Esophagus squamous epithelium (tissue), 5 donors: ENCODE measurements at regions of chr4 and their contacts with region 1.

Region 1: DNA sequence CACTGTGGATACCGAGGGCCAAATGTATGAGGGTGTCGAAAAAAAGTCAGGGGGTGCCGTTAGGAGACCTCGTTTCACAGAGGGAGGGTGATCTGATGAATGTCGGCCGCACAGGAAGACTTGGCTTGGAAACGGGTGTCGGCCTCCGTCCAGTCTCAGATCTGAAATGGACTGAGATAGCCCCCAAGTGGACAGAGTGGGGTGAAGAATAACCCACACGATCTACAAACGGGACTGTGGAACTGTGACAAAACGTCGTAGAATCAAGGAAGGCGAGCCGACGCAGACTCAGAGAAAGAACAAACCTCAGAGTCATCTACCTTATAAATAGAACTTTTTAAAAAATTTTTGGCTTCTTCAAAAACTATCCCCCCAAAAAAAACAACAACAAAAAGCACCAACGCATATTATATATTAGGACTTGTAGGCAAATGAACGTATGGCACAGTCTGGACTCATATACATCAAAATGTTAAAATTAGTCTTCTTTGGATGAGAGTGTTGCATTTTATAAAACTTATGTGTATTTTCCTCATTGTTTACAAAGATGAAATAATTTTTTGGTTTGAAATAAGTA is 63.8 kb upstream of the IRF2 start:
- DNase-seq: peak; percentile 68
- H3K4me3 ChIP-seq: peak overlapping the region; percentile 49 to 85 (median 66)
- H3K27ac ChIP-seq: peak overlapping the region; percentile 91 to 99 (median 96)
- H3K4me1 ChIP-seq: peaks cover 3 to 35% (median 25%) of the 10 kb centered on the region in 3 donors
- H3K27me3 ChIP-seq: no peaks in the 10 kb centered on the region
- CTCF ChIP-seq: peak; percentile 56 to 81 (median 74)
- POLR2A ChIP-seq: no peak

Region 2: DNA sequence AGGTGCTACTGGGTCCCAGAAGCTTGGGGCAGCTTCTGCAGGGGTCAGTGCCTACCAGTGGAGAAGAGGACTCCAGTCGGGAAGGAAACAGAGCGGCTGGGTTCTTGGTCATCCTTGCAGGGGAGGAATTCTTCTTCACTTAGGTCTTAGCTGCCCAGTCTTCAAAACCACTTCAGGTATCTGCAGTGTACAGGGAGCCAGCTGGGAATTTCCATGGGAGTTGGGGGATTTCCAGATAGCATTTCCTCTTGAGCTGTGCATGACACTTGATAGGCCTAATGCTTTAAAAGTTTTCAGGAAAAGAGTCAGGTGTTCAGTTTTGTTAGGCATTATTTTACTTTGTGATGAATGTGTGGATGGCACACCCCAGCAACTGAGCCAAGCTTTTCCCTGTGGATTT is 262.3 kb before region 1 on chr4:
- intact Hi-C with region 1: loop called (anchors 5 kb)
- DNase-seq: no peak
- H3K4me3 ChIP-seq: no peak overlapping the region
- H3K27ac ChIP-seq: no peak overlapping the region
- H3K4me1 ChIP-seq: peaks cover 0 to 1% (median 0%) of the 10 kb centered on the region in 3 donors
- H3K27me3 ChIP-seq: no peaks in the 10 kb centered on the region
- CTCF ChIP-seq: no peak
- POLR2A ChIP-seq: no peak

Region 3: GRCh38 chr4:184400375-184400870 is 137.7 kb before region 1 on chr4:
- intact Hi-C with region 1: loop called (anchors 10 kb)
- DNase-seq: no peak
- H3K4me3 ChIP-seq: no peak overlapping the region
- H3K27ac ChIP-seq: peak overlapping the region in 3 of 4 donors; percentile 48 to 70 (median 64)
- H3K4me1 ChIP-seq: peaks cover 8 to 66% (median 32%) of the 10 kb centered on the region in 3 donors
- H3K27me3 ChIP-seq: no peaks in the 10 kb centered on the region
- CTCF ChIP-seq: peak in 2 of 6 experiments; percentile 16 to 27
- POLR2A ChIP-seq: no peak

Region 4: GRCh38 chr4:184474263-184475095 is 63.6 kb before region 1 on chr4 and contains the start of gene IRF2:
- intact Hi-C with region 1: loop called (anchors 5 kb)
- DNase-seq: peak; percentile 83
- H3K4me3 ChIP-seq: peak within 1 kb of the TSS; percentile 74 to 89 (median 81)
- H3K27ac ChIP-seq: peak within 1 kb of the TSS; percentile 97 to 99 (median 97)
- H3K4me1 ChIP-seq: peaks cover 3 to 64% (median 24%) of the 10 kb centered on the region in 3 donors
- H3K27me3 ChIP-seq: no peaks in the 10 kb centered on the region
- CTCF ChIP-seq: peak in 3 of 6 experiments; percentile 28 to 44 (median 44)
- POLR2A ChIP-seq: peak in 3 of 4 donors; percentile 84 to 97 (median 96)
- total RNA-seq, gene IRF2: 16.6 to 30.2 (median 23.4) TPM

Region 5: DNA sequence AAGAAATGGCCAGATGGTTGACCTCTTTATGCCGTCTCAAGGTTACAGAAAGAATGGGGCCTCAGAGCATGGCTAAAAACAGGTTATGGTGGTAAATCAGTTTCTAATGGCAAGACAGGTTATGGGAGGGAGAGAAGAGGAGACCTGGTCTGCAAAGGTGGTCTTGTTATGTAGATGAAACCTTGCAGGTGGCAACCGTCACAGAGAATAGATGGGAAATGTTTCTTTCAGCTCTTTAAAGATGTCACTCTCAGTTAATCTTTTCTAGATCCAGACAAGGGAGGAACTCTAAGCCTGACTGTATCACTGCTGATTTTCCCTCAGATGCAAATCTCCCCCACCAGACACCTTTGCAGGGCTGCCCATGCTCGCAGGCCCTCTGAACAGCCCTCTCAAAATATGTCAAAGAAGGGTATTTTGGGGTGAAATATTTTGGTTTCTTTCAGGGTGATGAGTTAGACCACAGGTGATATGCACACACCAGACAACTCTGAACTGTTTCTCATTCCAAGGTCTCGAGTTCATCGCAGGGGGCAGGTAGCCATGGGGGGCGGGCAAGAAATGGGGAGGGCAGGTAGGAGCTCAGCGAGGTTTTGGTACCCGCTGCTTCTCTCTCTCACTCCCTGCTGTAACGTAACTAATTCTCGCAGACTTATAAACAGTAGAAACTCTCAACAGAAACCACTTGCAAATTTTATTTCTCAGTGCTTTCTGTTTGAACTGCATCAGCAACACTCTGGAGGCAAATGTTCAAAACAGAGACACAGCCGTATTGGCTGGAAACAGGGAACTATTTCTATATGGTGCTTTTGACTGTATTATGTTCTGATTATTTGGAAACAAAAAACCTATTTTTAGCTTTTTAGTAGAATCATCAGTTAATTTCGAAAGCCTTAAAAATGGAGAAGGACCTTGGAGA is 78.8 kb after region 1 on chr4:
- intact Hi-C with region 1: no loop called
- DNase-seq: no peak
- H3K4me3 ChIP-seq: no peak overlapping the region
- H3K27ac ChIP-seq: no peak overlapping the region
- H3K4me1 ChIP-seq: peaks cover 0 to 8% (median 0%) of the 10 kb centered on the region in 3 donors
- H3K27me3 ChIP-seq: no peaks in the 10 kb centered on the region
- CTCF ChIP-seq: no peak
- POLR2A ChIP-seq: no peak

Region 6: DNA sequence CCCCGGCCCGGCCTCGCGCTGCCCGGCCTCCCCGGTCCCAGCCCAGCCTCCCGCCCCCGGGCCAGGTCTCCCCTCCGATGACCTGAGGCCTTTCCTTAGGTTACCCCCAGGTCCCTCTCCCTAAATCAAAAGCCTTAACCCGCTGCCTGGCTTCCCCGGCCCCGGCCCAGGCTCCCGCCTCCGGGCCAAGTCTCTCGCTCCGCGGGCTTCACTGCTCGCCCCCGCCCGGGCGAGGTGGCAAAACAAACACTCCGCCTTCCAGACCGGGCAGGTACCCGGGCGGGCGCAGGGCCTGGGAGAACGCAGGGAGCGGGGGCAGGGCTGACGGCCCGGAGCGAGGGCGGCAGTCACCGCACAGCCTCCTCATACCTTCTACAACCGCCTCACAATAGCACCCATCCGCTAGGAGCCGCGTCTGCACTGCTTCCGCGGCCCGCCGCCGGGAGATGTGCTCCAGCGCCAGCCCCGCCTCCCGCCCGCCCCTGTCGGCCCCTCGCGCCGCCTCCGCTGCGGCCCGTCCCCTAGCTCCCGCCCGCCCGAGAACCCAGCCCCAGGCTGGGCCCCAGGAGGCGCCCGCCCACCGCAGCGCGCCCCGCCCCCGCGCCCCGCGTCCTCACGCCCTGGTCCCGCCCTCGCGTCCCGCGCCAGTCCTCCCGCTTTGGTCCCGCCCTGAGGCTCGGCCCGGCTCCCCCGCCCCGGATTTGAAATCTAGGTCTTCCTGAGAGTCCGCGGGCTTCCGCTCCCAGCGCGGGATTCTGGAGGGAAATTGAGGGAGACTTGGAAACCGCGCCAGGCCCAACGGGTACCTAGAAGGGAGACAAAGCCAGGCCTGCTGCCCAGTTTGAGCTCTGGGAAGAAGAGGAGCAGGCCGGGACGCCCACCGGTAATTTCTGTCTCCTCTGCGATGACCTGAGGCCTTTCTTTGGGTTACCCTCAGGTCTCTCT is 111.2 kb after region 1 on chr4 and contains the starts of genes CASP3 and PRIMPOL:
- intact Hi-C with region 1: loop called (anchors 10 kb)
- DNase-seq: peak; percentile 97
- H3K4me3 ChIP-seq: peak within 1 kb of the TSS; percentile 77 to 91 (median 89)
- H3K27ac ChIP-seq: peak within 1 kb of the TSS; percentile 98 to 100 (median 99)
- H3K4me1 ChIP-seq: peaks cover 20 to 54% (median 36%) of the 10 kb centered on the region in 3 donors
- H3K27me3 ChIP-seq: no peaks in the 10 kb centered on the region
- CTCF ChIP-seq: peak in 1 of 6 experiments; percentile 35
- POLR2A ChIP-seq: peak in 2 of 4 donors; percentile 91 to 95
- total RNA-seq, gene CASP3: 22.9 to 48.0 (median 28.5) TPM
- total RNA-seq, gene PRIMPOL: 4.5 to 15.6 (median 10.8) TPM